Tibial artery (tissue), 4 donors: ENCODE measurements at regions of chr21 and their contacts with region 1.

Region 1: DNA sequence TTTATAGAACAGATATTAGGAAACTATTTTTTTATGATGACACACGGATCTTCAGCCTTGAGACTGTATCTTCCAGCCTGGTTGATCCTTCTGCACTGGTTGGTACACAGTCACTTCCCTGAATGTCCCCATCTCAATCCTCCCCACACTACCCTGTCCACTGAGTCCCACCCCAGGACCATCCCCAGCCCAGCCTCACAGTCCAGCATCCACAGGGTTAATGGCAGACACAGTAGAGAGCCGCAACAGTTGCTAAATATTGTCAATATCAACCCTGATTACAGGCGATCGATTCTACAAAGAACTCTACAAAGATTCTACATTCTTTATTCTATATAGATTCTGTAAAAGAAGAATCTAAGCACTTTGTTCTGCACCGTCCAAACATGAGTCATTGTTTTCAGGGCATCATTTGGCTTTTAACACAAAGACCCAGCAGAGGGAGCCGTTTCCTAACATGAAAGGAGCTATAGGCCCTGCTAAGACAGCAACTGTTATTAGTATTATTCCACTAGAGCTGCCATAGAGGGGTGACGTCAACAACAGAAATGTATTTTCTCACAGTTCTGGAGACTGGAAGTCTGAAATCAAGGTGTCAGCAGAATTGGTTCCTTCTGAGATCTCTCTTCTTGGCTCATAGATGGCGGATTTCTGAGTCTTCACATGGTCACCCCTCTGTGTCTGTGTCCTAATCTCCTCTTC is 30.1 kb upstream of the IFNAR2 start:
- DNase-seq: peak; percentile 83 to 88
- H3K4me3 ChIP-seq: no peak overlapping the region
- H3K27ac ChIP-seq: no peak overlapping the region
- H3K4me1 ChIP-seq: peaks cover 0 to 15% (median 2%) of the 10 kb centered on the region in 4 donors
- H3K27me3 ChIP-seq: no peaks in the 10 kb centered on the region
- CTCF ChIP-seq: peak; percentile 77 to 85

Region 2: GRCh38 chr21:33374450-33375096 is 174.9 kb after region 1 on chr21:
- intact Hi-C with region 1: loop called (anchors 10 kb)
- DNase-seq: peak in 1 of 2 donors; percentile 49
- H3K4me3 ChIP-seq: no peak overlapping the region
- H3K27ac ChIP-seq: no peak overlapping the region
- H3K4me1 ChIP-seq: peaks cover 0 to 12% (median 2%) of the 10 kb centered on the region in 4 donors
- H3K27me3 ChIP-seq: no peaks in the 10 kb centered on the region
- CTCF ChIP-seq: peak; percentile 21 to 30

Region 3: DNA sequence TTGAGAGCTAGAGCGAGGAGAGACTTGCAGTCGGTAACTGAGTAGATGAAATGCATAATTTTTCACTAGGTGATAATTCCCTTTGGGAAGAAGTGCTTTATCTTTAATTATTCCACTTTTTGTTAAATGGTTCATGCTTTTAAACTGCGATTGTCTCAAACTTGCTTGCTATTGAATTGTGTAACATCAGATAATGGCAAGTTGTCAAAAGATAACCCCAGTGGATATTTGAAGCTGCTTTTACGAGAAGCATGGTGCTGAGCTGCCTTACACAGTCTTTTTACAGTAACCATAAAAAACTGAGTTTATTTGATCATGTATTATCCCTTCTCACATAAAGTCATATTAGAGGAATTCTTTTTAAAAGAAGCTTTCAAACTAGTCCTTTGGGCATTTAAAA is 249.9 kb after region 1 on chr21:
- intact Hi-C with region 1: loop called (anchors 5 kb)
- DNase-seq: no peak
- H3K4me3 ChIP-seq: no peak overlapping the region
- H3K27ac ChIP-seq: no peak overlapping the region
- H3K4me1 ChIP-seq: peaks cover 0 to 4% (median under 1%) of the 10 kb centered on the region in 4 donors
- H3K27me3 ChIP-seq: no peaks in the 10 kb centered on the region
- CTCF ChIP-seq: no peak